ENCODE measurements at regions of chr10 and their contacts with region 1.

Region 1: GRCh38 chr10:89029785-89030437 is 39.3 kb downstream of the FAS start:
- DNase-seq: peak; percentile 80
- H3K4me3 ChIP-seq: no peak overlapping the region
- H3K27ac ChIP-seq: peak overlapping the region; percentile 19; the same call in 1 of the 2 replicates
- H3K4me1 ChIP-seq: peaks cover 34% of the 10 kb centered on the region
- H3K27me3 ChIP-seq: no peaks in the 10 kb centered on the region

Region 2: GRCh38 chr10:89217057-89217990 is 187.4 kb after region 1 on chr10:
- in situ Hi-C with region 1: loop called (anchors 5 kb)
- DNase-seq: peak; percentile 72
- H3K4me3 ChIP-seq: 0 out of 2 replicates have a peak overlapping the region, but pooled peaks have one; percentile 5
- H3K27ac ChIP-seq: peak overlapping the region; percentile 27; the same call in 1 of the 2 replicates
- H3K4me1 ChIP-seq: peaks cover 27% of the 10 kb centered on the region
- H3K27me3 ChIP-seq: no peaks in the 10 kb centered on the region

Region 3: DNA sequence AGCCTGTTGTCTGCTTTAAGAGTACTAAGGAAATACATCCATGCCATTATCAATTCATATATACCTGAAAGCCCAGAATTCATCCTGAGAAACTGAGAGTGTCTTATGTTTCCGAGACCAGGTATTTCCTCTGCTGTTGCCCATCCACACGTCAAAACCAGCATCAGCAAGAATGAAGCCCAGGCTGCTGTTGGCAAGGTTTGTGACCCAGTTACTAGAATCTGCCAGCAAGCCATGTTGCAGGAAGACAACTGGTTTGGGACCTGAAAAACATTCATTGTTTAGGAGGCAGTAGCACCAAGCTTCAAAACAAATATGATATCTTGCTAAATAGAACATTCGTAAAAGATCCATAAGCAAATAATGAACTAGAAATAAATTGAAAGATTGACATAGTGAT is 198.2 kb after region 1 on chr10:
- in situ Hi-C with region 1: no loop called
- DNase-seq: no peak
- H3K4me3 ChIP-seq: no peak overlapping the region
- H3K27ac ChIP-seq: no peak overlapping the region
- H3K4me1 ChIP-seq: no peaks in the 10 kb centered on the region
- H3K27me3 ChIP-seq: no peaks in the 10 kb centered on the region

Region 4: GRCh38 chr10:89391917-89392756 is 362.2 kb after region 1 on chr10 and contains the start of gene IFIT1:
- in situ Hi-C with region 1: loop called (anchors 25 kb)
- DNase-seq: peak; percentile 91
- H3K4me3 ChIP-seq: peak within 1 kb of the TSS; percentile 93
- H3K27ac ChIP-seq: peak within 1 kb of the TSS; percentile 83
- H3K4me1 ChIP-seq: peaks cover 11% of the 10 kb centered on the region; the same call in 1 of the 2 replicates
- H3K27me3 ChIP-seq: no peaks in the 10 kb centered on the region
- total RNA-seq, gene IFIT1: 15.2 and 18.6 TPM in 2 replicates